ENCODE measurements at regions of chr3 and their contacts with region 1.

Region 1: GRCh38 chr3:112642912-112643506 is 2.1 kb upstream of the CCDC80 start:
- DNase-seq: peak; percentile 62 to 89 (median 74)
- ATAC-seq: peak; percentile 100
- H3K4me3 ChIP-seq: peak overlapping the region; percentile 23
- H3K4me3 Mint-ChIP-seq: peak overlapping the region; percentile 58
- H3K27ac ChIP-seq: no peak overlapping the region
- H3K27ac Mint-ChIP-seq: no peak overlapping the region
- H3K4me1 ChIP-seq: peaks cover 15% of the 10 kb centered on the region
- H3K4me1 Mint-ChIP-seq: peaks cover 6% of the 10 kb centered on the region
- H3K27me3 ChIP-seq: peaks cover 0 to 15% of the 10 kb centered on the region in 2 experiments
- H3K27me3 Mint-ChIP-seq: peaks cover 5% of the 10 kb centered on the region
- CTCF ChIP-seq: peak; percentile 77

Region 2: DNA sequence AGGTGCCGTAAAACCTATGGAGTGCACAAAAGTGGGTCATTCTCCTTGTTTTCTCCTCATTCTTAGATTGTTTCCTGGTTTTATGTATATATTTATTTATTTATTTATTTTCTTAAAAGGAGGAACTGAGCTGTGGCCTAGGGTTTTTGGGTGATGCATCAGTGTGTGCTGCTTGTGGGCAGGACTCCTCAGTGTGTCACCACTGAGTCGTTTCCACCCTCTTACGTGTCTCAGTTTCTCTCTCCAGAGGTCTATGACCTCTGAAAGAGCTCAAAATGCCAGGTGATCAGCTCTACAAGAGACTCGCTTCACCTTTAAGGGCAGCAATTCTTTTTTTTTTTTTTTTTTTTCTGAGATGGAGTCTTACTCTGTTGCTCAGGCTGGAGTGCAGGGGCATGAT is 237.2 kb before region 1 on chr3:
- CTCF ChIA-PET with region 1: no interaction called
- POLR2A ChIA-PET with region 1: no interaction called
- intact Hi-C with region 1: no loop called
- DNase-seq: peak in 2 of 14 experiments; percentile 20 to 46
- ATAC-seq: no peak
- H3K4me3 ChIP-seq: no peak overlapping the region
- H3K4me3 Mint-ChIP-seq: no peak overlapping the region
- H3K27ac ChIP-seq: no peak overlapping the region
- H3K27ac Mint-ChIP-seq: no peak overlapping the region
- H3K4me1 ChIP-seq: no peaks in the 10 kb centered on the region
- H3K4me1 Mint-ChIP-seq: no peaks in the 10 kb centered on the region
- H3K27me3 ChIP-seq: no peaks in the 10 kb centered on the region
- H3K27me3 Mint-ChIP-seq: no peaks in the 10 kb centered on the region
- CTCF ChIP-seq: no peak

Region 3: GRCh38 chr3:112514527-112515128 is 128.4 kb before region 1 on chr3:
- CTCF ChIA-PET with region 1: no interaction called
- POLR2A ChIA-PET with region 1: no interaction called
- intact Hi-C with region 1: no loop called
- DNase-seq: peak in 1 of 14 experiments; percentile 47
- ATAC-seq: no peak
- H3K4me3 ChIP-seq: no peak overlapping the region
- H3K4me3 Mint-ChIP-seq: no peak overlapping the region
- H3K27ac ChIP-seq: no peak overlapping the region
- H3K27ac Mint-ChIP-seq: no peak overlapping the region
- H3K4me1 ChIP-seq: no peaks in the 10 kb centered on the region
- H3K4me1 Mint-ChIP-seq: peaks cover 20% of the 10 kb centered on the region
- H3K27me3 ChIP-seq: no peaks in the 10 kb centered on the region
- H3K27me3 Mint-ChIP-seq: no peaks in the 10 kb centered on the region
- CTCF ChIP-seq: no peak

Region 4: DNA sequence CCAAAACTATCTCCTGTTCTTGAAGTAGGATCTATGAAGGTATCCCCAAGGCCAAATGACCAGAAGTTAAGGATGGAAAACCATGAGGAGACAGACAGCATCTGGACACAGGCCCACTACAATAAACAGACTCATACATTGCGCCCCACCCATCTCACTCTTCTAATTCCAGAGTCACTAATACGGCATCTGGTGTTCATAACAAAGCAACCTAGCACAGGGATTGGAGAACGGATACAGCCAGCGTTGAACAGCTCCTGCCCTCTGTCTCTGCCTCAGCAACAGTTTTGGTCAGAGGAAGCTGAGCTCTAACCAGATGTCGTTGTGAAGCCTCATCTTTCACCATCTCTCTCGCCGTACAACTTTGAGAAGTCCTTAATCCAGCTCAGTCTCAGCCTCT is 42.4 kb after region 1 on chr3:
- CTCF ChIA-PET with region 1: no interaction called
- POLR2A ChIA-PET with region 1: no interaction called
- intact Hi-C with region 1: no loop called
- DNase-seq: no peak
- ATAC-seq: no peak
- H3K4me3 ChIP-seq: no peak overlapping the region
- H3K4me3 Mint-ChIP-seq: no peak overlapping the region
- H3K27ac ChIP-seq: no peak overlapping the region
- H3K27ac Mint-ChIP-seq: no peak overlapping the region
- H3K4me1 ChIP-seq: peaks cover 5% of the 10 kb centered on the region
- H3K4me1 Mint-ChIP-seq: peaks cover 6% of the 10 kb centered on the region
- H3K27me3 ChIP-seq: no peaks in the 10 kb centered on the region
- H3K27me3 Mint-ChIP-seq: no peaks in the 10 kb centered on the region
- CTCF ChIP-seq: no peak

Region 5: DNA sequence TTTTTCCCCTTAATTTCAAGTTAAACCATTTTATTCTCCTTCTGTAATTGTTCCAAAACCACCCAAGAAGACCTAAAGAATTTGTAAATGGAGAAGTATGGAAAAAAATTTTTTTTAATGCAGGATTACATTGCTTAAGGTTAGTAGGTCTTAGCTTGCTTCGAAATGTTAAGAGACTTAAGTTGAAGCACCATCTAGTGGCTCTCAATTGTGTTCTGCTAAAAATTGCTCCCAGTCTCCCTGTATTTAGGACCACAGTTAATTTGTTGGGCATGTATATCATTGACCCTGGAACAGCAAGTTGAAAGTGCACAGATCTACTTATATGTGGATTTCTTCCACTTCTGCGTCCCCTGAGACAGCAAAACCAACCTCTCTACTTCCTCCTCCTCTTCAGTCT is 171.3 kb after region 1 on chr3:
- CTCF ChIA-PET with region 1: no interaction called
- POLR2A ChIA-PET with region 1: no interaction called
- intact Hi-C with region 1: loop called in 1 of 2 experiments (anchors 1 kb)
- DNase-seq: peak in 3 of 14 experiments; percentile 38 to 47 (median 45)
- ATAC-seq: no peak
- H3K4me3 ChIP-seq: no peak overlapping the region
- H3K4me3 Mint-ChIP-seq: no peak overlapping the region
- H3K27ac ChIP-seq: no peak overlapping the region
- H3K27ac Mint-ChIP-seq: no peak overlapping the region
- H3K4me1 ChIP-seq: peaks cover 5% of the 10 kb centered on the region
- H3K4me1 Mint-ChIP-seq: peaks cover 29% of the 10 kb centered on the region
- H3K27me3 ChIP-seq: no peaks in the 10 kb centered on the region
- H3K27me3 Mint-ChIP-seq: no peaks in the 10 kb centered on the region
- CTCF ChIP-seq: peak; percentile 54

Region 6: DNA sequence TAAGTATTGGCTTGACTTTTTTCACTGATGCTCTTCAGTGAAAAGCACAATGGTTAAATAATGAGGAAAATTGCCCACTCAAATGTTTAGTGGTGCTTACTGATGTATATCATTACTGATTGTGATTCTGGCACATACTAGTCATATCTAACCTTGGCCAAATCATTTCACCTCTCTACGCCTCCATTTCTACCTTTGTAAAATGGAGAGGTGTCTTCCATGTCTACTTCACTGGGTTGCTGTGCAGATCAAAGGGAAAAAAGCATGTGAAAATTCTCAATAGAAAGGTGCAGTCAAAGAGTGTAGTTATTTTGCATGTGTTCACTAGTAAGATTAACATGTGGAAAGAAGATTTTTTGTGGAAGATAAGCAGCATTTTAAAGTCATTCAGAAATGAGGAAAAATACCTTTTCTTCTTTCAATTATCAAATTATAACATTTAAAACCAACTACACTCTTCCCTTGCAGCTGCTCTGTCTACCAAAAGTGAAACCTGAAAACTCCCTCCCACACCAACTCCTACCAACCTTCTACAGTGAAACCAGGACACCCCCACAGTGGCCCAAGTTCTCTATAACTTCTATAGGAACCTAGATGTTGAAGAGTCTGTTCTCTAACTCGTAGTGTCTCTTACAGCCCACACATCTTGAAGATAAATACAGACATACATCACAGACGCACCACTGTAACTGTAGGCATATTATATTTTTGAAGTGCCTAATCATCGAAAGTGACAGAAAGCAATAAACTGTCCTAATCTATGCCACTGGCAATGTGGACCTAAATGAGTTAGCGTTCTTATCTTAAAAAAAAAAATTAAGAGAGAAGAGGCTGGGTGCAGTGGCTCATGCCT is 330.5 kb after region 1 on chr3:
- CTCF ChIA-PET with region 1: interaction called, 32 read pairs
- POLR2A ChIA-PET with region 1: interaction called, 8 read pairs
- intact Hi-C with region 1: loop called (anchors 1 kb)
- DNase-seq: peak in 7 of 14 experiments; percentile 13 to 69 (median 50)
- ATAC-seq: peak; percentile 81
- H3K4me3 ChIP-seq: peak overlapping the region; percentile 65
- H3K4me3 Mint-ChIP-seq: peak overlapping the region; percentile 92
- H3K27ac ChIP-seq: peak overlapping the region; percentile 65 to 69
- H3K27ac Mint-ChIP-seq: peak overlapping the region; percentile 94
- H3K4me1 ChIP-seq: peaks cover 34% of the 10 kb centered on the region
- H3K4me1 Mint-ChIP-seq: peaks cover 94% of the 10 kb centered on the region
- H3K27me3 ChIP-seq: no peaks in the 10 kb centered on the region
- H3K27me3 Mint-ChIP-seq: no peaks in the 10 kb centered on the region
- CTCF ChIP-seq: no peak

Region 7: GRCh38 chr3:112979240-112979832 is 336.3 kb after region 1 on chr3:
- CTCF ChIA-PET with region 1: interaction called, 32 read pairs
- POLR2A ChIA-PET with region 1: interaction called, 8 read pairs
- intact Hi-C with region 1: loop called (anchors 1 kb)
- DNase-seq: peak in 4 of 14 experiments; percentile 39 to 77 (median 72)
- ATAC-seq: no peak
- H3K4me3 ChIP-seq: no peak overlapping the region
- H3K4me3 Mint-ChIP-seq: peak overlapping the region; percentile 1
- H3K27ac ChIP-seq: no peak overlapping the region
- H3K27ac Mint-ChIP-seq: peak overlapping the region; percentile 6
- H3K4me1 ChIP-seq: peaks cover 36% of the 10 kb centered on the region
- H3K4me1 Mint-ChIP-seq: peaks cover 73% of the 10 kb centered on the region
- H3K27me3 ChIP-seq: no peaks in the 10 kb centered on the region
- H3K27me3 Mint-ChIP-seq: no peaks in the 10 kb centered on the region
- CTCF ChIP-seq: peak; percentile 94

Region 8: DNA sequence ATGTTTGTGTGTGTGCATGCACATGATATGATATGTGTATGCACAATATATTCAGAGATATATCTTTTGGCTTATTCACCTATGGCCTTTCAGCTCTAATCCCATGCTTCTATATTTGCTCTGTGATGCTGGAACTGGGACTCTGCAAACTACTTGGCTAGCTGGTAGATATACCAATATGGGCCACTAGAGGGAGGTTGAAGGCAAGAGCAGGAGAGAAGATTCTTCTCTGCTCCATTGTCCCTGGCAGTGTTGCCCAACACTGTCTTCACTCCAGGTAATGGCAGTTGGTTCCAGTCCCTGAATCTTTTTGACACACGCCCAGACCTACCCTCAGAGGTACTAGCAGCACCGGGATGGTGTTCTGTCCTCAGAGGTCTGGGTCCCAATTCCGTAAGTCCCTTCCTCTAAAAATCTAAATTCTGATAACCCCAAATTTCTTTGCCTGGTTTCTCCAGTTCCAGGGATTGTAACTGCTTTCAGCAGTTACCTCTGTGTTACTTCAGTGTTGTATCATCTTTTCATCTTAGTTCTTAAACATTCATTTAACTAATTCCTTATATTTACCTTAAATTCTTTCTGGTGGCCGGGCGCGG is 392.5 kb after region 1 on chr3:
- CTCF ChIA-PET with region 1: interaction called, 10 read pairs
- POLR2A ChIA-PET with region 1: no interaction called
- intact Hi-C with region 1: loop called (anchors 5 kb)
- DNase-seq: peak in 10 of 14 experiments; percentile 3 to 76 (median 8)
- ATAC-seq: peak; percentile 84
- H3K4me3 ChIP-seq: no peak overlapping the region
- H3K4me3 Mint-ChIP-seq: no peak overlapping the region
- H3K27ac ChIP-seq: no peak overlapping the region
- H3K27ac Mint-ChIP-seq: no peak overlapping the region
- H3K4me1 ChIP-seq: no peaks in the 10 kb centered on the region
- H3K4me1 Mint-ChIP-seq: peaks cover 5% of the 10 kb centered on the region
- H3K27me3 ChIP-seq: no peaks in the 10 kb centered on the region
- H3K27me3 Mint-ChIP-seq: no peaks in the 10 kb centered on the region
- CTCF ChIP-seq: peak; percentile 88

Region 9: DNA sequence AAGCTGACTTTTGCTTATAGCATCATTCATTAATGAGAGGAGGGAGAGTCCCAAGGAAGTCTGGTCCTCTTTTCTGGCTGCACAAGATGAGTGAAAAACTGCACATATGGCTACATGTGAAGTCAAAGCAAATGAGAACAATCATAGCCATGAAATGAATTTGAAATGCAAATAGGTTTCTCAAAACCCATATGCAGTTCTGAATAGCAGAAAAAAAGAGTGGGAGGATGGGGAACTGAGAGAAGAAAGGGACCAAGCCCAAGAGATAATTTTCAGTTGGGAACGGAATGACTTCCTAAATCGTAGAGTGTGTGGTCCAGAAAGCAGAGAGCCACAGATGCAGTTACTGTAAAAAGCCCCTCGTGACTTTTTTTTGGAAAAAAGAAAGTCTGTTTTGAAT is 414.1 kb after region 1 on chr3:
- CTCF ChIA-PET with region 1: no interaction called
- POLR2A ChIA-PET with region 1: no interaction called
- intact Hi-C with region 1: loop called in 1 of 2 experiments (anchors 5 kb)
- DNase-seq: no peak
- ATAC-seq: no peak
- H3K4me3 ChIP-seq: no peak overlapping the region
- H3K4me3 Mint-ChIP-seq: no peak overlapping the region
- H3K27ac ChIP-seq: no peak overlapping the region
- H3K27ac Mint-ChIP-seq: no peak overlapping the region
- H3K4me1 ChIP-seq: no peaks in the 10 kb centered on the region
- H3K4me1 Mint-ChIP-seq: peaks cover 15% of the 10 kb centered on the region
- H3K27me3 ChIP-seq: no peaks in the 10 kb centered on the region
- H3K27me3 Mint-ChIP-seq: no peaks in the 10 kb centered on the region
- CTCF ChIP-seq: no peak

Region 10: GRCh38 chr3:113287803-113288648 is 645.0 kb after region 1 on chr3:
- CTCF ChIA-PET with region 1: interaction called, 19 read pairs
- POLR2A ChIA-PET with region 1: no interaction called
- intact Hi-C with region 1: loop called (anchors 1 kb)
- DNase-seq: peak in 12 of 14 experiments; percentile 12 to 72 (median 38)
- ATAC-seq: peak; percentile 61
- H3K4me3 ChIP-seq: no peak overlapping the region
- H3K4me3 Mint-ChIP-seq: no peak overlapping the region
- H3K27ac ChIP-seq: no peak overlapping the region
- H3K27ac Mint-ChIP-seq: no peak overlapping the region
- H3K4me1 ChIP-seq: no peaks in the 10 kb centered on the region
- H3K4me1 Mint-ChIP-seq: no peaks in the 10 kb centered on the region
- H3K27me3 ChIP-seq: no peaks in the 10 kb centered on the region
- H3K27me3 Mint-ChIP-seq: no peaks in the 10 kb centered on the region
- CTCF ChIP-seq: peak; percentile 99